Astrocyte of the cerebellum (primary cell): ENCODE measurements at regions of chr5 and their contacts with region 1.

Region 1: GRCh38 chr5:108588323-108588722 is 159.4 kb upstream of the FER start:
- DNase-seq: no peak
- H3K4me3 ChIP-seq: no peak overlapping the region
- CTCF ChIP-seq: no peak

Region 2: GRCh38 chr5:108634617-108635288 is 46.4 kb after region 1 on chr5:
- in situ Hi-C with region 1: loop called (anchors 5 kb)
- DNase-seq: no peak
- H3K4me3 ChIP-seq: no peak overlapping the region
- CTCF ChIP-seq: no peak

Region 3: DNA sequence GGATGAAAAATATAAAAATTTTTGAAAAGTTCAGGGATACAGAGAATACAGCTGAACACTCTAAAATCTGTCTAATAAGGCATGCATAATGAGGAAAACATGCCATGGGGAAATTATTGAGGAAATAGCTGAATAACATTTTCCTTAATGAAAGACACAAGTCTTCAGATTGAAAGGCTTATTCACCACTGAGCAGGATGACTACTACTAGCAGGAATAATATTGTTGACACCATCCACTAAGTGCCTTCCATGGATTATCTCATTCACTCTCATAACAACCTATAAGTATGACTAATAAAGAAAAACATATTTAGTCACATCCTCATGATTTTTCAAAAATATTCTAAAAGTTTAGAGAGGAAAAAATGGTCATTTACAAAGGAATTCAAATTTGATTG is 62.7 kb after region 1 on chr5:
- in situ Hi-C with region 1: no loop called
- DNase-seq: no peak
- H3K4me3 ChIP-seq: no peak overlapping the region
- CTCF ChIP-seq: no peak